ENCODE measurements at regions of chr2 and their contacts with region 1.

Region 1: DNA sequence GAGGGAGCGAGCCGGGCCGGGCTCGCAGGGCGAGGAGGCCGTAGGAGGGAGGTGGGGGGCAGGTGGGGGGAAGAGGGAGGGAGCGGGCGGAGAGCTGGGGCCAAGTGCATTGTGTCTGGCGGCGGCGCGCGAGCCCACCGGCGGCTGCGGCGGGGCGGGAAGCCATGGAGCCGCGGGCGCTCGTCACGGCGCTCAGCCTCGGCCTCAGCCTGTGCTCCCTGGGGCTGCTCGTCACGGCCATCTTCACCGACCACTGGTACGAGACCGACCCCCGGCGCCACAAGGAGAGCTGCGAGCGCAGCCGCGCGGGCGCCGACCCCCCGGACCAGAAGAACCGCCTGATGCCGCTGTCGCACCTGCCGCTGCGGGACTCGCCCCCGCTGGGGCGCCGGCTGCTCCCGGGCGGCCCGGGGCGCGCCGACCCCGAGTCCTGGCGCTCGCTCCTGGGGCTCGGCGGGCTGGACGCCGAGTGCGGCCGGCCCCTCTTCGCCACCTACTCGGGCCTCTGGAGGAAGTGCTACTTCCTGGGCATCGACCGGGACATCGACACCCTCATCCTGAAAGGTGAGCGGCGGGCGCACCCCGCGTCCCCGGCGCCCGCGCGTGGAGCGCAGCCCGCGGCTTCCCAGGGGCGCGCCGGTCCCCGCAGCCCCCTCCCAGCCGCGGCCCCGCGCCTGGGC is at the start of gene TMEM178A:
- DNase-seq: no peak
- total RNA-seq, gene TMEM178A: 0.69 to 1.0 TPM

Region 2: GRCh38 chr2:39723946-39724827 is 58.2 kb after region 1 on chr2:
- intact Hi-C with region 1: no loop called
- DNase-seq: no peak

Region 3: DNA sequence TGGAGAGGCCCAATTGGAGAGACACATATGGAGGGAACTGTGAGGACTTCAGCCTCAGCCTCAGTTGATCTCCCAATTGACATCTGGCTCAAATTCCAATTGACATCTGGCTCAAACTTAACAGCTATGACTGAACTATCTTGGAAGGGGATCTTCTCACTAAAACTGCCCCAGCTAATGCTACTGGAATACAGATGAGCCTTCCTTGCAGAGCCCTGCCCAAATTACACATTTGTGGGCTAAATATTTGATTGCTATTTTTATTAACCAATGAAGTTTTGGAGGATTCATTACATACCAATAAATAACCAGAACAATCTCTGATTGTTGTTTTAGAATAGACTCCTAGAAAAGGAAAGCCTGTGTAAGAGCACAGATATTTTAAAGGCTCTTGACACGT is 302.1 kb after region 1 on chr2:
- intact Hi-C with region 1: loop called in 1 of 2 experiments (anchors 10 kb)
- DNase-seq: no peak